Right ventricle myocardium inferior (tissue), 1 donor: ENCODE measurements at regions of chr3 and their contacts with region 1.

Region 1: GRCh38 chr3:194404365-194405140 is 5.5 kb upstream of the GP5 start:
- DNase-seq: no peak
- ATAC-seq: no peak

Region 2: DNA sequence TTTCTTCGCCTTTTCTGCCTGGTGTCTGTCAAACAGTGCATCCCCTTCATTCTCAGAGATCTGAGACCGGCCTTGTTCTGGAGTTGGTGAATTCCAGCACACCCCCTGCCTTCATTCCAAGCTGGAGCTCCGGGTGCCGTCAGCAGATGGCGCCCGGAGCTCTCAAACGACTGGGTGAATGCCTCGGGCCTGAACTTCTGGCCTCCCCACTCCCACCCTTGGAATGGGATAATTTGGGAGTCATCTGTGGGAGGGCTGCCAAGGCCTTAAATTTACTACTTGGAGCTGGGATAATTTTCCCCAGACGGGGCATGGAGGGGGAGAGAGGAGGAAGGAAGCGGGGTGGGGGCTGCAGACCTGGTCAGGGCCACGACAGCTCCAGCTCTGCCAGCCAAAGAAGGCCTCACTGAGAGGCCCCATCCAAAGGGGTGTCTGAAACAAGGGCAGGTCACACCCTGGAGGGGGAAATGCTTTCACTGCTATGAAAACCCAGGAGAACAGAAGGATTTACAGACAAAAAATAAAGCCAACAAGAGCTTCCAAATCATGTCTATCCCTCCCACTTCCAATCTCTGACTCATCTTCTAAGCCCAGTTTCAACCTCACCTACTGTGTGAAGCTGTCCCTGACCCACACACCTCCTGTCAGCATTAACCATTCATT is 623.6 kb before region 1 on chr3:
- intact Hi-C with region 1: loop called (anchors 5 kb)
- DNase-seq: peak; percentile 83
- ATAC-seq: peak; percentile 92

Region 3: GRCh38 chr3:194315088-194315964 is 89.2 kb before region 1 on chr3:
- intact Hi-C with region 1: no loop called
- DNase-seq: peak; percentile 92
- ATAC-seq: peak; percentile 89

Region 4: DNA sequence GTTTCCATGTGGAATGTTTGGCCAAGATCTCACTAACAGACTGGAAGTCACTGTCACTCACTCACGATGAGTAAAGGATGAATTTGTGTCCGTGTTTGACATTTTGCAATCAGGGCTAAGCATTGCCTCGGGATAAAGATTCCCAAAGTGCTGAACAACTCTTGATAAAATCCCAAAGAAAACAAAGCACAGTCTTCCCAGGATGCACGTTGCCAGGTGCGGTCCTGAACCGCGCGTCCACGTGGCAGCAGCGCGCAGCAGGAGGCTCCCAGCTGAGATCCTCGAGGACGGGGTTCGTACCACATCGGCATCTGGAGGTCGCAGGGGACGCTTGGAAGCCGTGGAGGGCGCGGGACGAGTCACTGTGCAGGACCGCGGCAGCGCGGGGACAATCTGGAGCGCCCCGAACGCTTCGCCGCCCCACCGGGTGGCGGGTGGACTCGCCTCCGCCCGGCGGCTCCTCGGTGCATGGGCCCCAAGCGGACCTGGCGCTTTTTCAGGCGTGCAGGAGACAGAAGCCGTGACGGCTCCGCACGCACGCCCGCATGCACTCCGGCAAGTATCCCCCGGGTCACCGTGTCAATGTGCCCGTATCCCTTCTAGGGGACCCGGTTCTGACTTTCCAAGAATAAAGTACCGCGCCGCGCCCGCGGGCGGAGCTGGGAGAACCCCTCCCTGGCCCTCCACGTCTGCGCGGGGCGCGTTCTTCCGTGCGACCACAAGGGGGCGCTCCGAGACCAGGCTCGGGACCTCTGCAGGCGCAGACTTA is 71.2 kb before region 1 on chr3:
- intact Hi-C with region 1: loop called (anchors 2 kb)
- DNase-seq: peak; percentile 94
- ATAC-seq: peak; percentile 92